CD8-positive, alpha-beta T cell (primary cell): ENCODE measurements at regions of chr1 and their contacts with region 1.

Region 1: DNA sequence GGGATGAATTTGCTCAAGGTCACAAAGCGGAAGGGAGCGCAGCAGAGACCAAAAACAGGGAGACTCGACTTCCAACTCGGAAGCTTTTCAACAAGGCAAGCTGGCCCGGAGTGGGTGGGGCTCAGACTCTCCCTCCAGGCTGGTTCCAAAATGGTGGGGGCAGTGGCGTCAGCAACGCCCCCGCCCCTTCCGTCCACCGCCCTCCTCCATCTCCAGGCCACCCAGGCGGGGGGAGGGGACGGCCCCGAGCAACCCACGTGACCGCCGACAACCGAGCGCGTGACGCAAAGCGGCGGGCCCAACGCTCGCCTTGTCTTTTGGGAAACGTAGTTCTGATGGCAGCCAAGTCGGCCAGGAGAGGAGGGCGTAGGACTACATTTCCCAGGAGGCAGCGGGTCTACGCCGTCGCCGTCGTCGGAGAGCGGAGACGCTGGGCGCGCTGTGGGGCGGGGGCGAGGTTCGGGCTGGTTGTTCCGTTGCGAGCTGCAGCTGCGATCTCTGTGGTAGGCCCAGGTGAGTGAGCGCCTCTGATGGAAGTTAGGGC is at the start of gene THRAP3:
- DNase-seq: peak; percentile 99 to 100 (median 100)
- ATAC-seq: peak; percentile 86
- H3K4me3 ChIP-seq: peak within 1 kb of the TSS; percentile 86 to 87
- H3K4me3 Mint-ChIP-seq: peak within 1 kb of the TSS; percentile 97
- H3K27ac ChIP-seq: peak within 1 kb of the TSS; percentile 97 to 100
- H3K27ac Mint-ChIP-seq: peak within 1 kb of the TSS; percentile 100
- H3K4me1 ChIP-seq: peaks cover 34% of the 10 kb centered on the region
- H3K4me1 Mint-ChIP-seq: peaks cover 34% of the 10 kb centered on the region
- H3K27me3 ChIP-seq: no peaks in the 10 kb centered on the region
- H3K27me3 Mint-ChIP-seq: no peaks in the 10 kb centered on the region
- CTCF ChIP-seq: no peak
- total RNA-seq, gene THRAP3: 83.2 to 88.4 TPM

Region 2: DNA sequence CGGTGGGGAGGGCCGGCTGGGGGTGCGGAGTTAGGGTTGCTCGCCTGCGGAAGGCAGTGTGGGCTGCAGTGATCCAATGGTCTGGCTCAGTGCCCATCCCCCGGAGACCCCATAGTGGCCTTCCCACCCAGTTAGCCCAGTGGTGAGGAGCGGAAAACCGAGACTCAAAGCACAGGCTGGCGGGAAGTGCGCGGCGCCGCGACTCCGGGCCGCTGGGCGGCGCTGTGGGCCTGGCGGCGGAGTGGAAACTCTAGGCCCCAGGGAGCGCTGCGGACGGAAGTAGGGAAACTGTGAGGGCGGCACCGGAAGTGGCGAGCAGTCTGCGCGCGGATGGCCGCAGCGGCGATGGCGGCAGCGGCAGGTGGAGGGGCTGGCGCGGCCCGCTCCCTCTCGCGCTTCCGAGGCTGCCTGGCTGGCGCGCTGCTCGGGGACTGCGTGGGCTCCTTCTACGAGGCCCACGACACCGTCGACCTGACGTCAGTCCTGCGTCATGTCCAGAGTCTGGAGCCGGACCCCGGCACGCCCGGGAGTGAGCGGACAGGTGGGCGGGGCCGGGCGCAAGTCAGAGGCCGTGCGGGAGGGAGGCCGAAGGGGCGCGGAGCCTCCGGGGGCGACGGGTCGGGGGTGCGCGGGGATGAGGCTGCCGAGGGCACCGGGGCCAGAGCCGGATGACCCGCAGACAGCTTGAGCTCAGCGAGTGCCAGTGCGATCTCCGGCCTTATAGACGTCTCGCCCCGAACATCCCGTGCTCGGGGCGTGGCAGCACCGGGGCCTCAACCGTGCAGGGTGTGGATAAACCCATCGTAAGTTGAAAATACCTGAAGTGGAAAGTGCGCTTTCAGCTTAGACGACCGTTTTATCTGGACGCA is 135.3 kb before region 1 on chr1 and contains the start of gene ADPRS:
- CTCF ChIA-PET with region 1: no interaction called
- POLR2A ChIA-PET with region 1: interaction called, 3 read pairs
- intact Hi-C with region 1: loop called (anchors 1 kb)
- DNase-seq: peak; percentile 81 to 96 (median 91)
- ATAC-seq: peak; percentile 89
- H3K4me3 ChIP-seq: peak within 1 kb of the TSS; percentile 89 to 98
- H3K4me3 Mint-ChIP-seq: peak within 1 kb of the TSS; percentile 90
- H3K27ac ChIP-seq: peak within 1 kb of the TSS; percentile 84 to 95
- H3K27ac Mint-ChIP-seq: peak within 1 kb of the TSS; percentile 94
- H3K4me1 ChIP-seq: peaks cover 24% of the 10 kb centered on the region
- H3K4me1 Mint-ChIP-seq: peaks cover 25% of the 10 kb centered on the region
- H3K27me3 ChIP-seq: peaks cover 5 to 6% of the 10 kb centered on the region in 2 experiments
- H3K27me3 Mint-ChIP-seq: peaks cover 15% of the 10 kb centered on the region
- CTCF ChIP-seq: peak; percentile 98
- total RNA-seq, gene ADPRS: 26.2 to 26.7 TPM

Region 3: GRCh38 chr1:36160949-36161485 is 63.0 kb before region 1 on chr1:
- CTCF ChIA-PET with region 1: interaction called, 9 read pairs
- POLR2A ChIA-PET with region 1: interaction called, 49 read pairs
- intact Hi-C with region 1: loop called in 1 of 2 experiments (anchors 2 kb)
- DNase-seq: peak; percentile 25 to 84 (median 68)
- ATAC-seq: peak; percentile 9
- H3K4me3 ChIP-seq: peak overlapping the region; percentile 52 to 59
- H3K4me3 Mint-ChIP-seq: peak overlapping the region; percentile 76
- H3K27ac ChIP-seq: peak overlapping the region; percentile 87 to 93
- H3K27ac Mint-ChIP-seq: peak overlapping the region; percentile 91
- H3K4me1 ChIP-seq: peaks cover 61% of the 10 kb centered on the region
- H3K4me1 Mint-ChIP-seq: peaks cover 71% of the 10 kb centered on the region
- H3K27me3 ChIP-seq: no peaks in the 10 kb centered on the region
- H3K27me3 Mint-ChIP-seq: no peaks in the 10 kb centered on the region
- CTCF ChIP-seq: no peak

Region 4: DNA sequence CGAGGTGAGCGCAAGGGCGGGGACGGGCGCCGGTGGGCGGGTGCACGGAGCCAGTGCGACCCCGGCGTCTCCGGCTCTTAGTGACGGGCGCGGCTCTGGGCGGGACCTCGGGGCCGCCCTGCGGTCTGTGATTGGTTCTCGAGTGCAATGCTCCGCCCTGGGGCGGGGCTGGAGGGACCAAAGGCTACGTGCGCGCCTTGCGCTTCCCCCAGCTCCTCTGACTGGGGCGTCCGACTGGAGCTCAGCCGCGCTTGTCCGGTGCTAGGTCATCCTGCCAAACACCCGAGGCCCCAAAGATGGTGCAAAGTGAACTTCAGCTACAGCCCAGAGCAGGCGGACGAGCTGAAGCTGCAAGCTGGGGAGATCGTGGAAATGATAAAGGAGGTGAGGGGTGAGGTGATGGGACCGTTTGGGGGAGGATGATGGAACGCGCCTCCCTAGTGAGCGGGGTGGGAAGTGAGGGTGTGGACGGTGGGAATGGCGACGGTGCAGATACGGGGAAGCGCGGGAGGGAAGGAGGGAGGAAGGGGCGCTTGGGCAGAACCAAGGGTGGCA is 82.9 kb after region 1 on chr1:
- CTCF ChIA-PET with region 1: no interaction called
- POLR2A ChIA-PET with region 1: no interaction called
- intact Hi-C with region 1: loop called (anchors 2 kb)
- DNase-seq: peak; percentile 84 to 96 (median 93)
- ATAC-seq: peak; percentile 98
- H3K4me3 ChIP-seq: peak overlapping the region; percentile 58 to 63
- H3K4me3 Mint-ChIP-seq: peak overlapping the region; percentile 96
- H3K27ac ChIP-seq: peak overlapping the region; percentile 63
- H3K27ac Mint-ChIP-seq: peak overlapping the region; percentile 94
- H3K4me1 ChIP-seq: peaks cover 13% of the 10 kb centered on the region
- H3K4me1 Mint-ChIP-seq: peaks cover 7% of the 10 kb centered on the region
- H3K27me3 ChIP-seq: no peaks in the 10 kb centered on the region
- H3K27me3 Mint-ChIP-seq: no peaks in the 10 kb centered on the region
- CTCF ChIP-seq: no peak

Region 5: GRCh38 chr1:36463803-36464604 is 239.9 kb after region 1 on chr1 and contains the start of gene MRPS15:
- CTCF ChIA-PET with region 1: no interaction called
- POLR2A ChIA-PET with region 1: no interaction called
- intact Hi-C with region 1: loop called in 1 of 2 experiments (anchors 1 kb)
- DNase-seq: peak; percentile 88 to 97 (median 94)
- ATAC-seq: peak; percentile 98
- H3K4me3 ChIP-seq: peak within 1 kb of the TSS; percentile 90 to 92
- H3K4me3 Mint-ChIP-seq: peak within 1 kb of the TSS; percentile 91
- H3K27ac ChIP-seq: peak within 1 kb of the TSS; percentile 82 to 90
- H3K27ac Mint-ChIP-seq: peak within 1 kb of the TSS; percentile 96
- H3K4me1 ChIP-seq: peaks cover 12% of the 10 kb centered on the region
- H3K4me1 Mint-ChIP-seq: peaks cover 29% of the 10 kb centered on the region
- H3K27me3 ChIP-seq: no peaks in the 10 kb centered on the region
- H3K27me3 Mint-ChIP-seq: no peaks in the 10 kb centered on the region
- CTCF ChIP-seq: no peak
- total RNA-seq, gene MRPS15: 37.9 to 45.4 TPM

Region 6: GRCh38 chr1:36482710-36483393 is 258.8 kb after region 1 on chr1 and contains the start of gene CSF3R:
- CTCF ChIA-PET with region 1: no interaction called
- POLR2A ChIA-PET with region 1: no interaction called
- intact Hi-C with region 1: no loop called
- DNase-seq: no peak
- ATAC-seq: no peak
- H3K4me3 ChIP-seq: no peak within 1 kb of the TSS
- H3K4me3 Mint-ChIP-seq: no peak within 1 kb of the TSS
- H3K27ac ChIP-seq: no peak within 1 kb of the TSS
- H3K27ac Mint-ChIP-seq: no peak within 1 kb of the TSS
- H3K4me1 ChIP-seq: peaks cover 3% of the 10 kb centered on the region
- H3K4me1 Mint-ChIP-seq: peaks cover 8% of the 10 kb centered on the region
- H3K27me3 ChIP-seq: no peaks in the 10 kb centered on the region
- H3K27me3 Mint-ChIP-seq: peaks cover 2% of the 10 kb centered on the region
- CTCF ChIP-seq: no peak
- total RNA-seq, gene CSF3R: 0.31 to 0.41 TPM